ENCODE measurements at regions of chr17 and their contacts with region 1.

Region 1: GRCh38 chr17:48047741-48048383 is at the start of gene NFE2L1:
- DNase-seq: peak; percentile 100
- H3K4me3 Mint-ChIP-seq: peak within 1 kb of the TSS; percentile 97
- H3K27ac Mint-ChIP-seq: peak within 1 kb of the TSS; percentile 97
- H3K4me1 Mint-ChIP-seq: peaks cover 50% of the 10 kb centered on the region
- H3K27me3 Mint-ChIP-seq: no peaks in the 10 kb centered on the region
- total RNA-seq, gene NFE2L1: 82.4 to 84.1 TPM

Region 2: DNA sequence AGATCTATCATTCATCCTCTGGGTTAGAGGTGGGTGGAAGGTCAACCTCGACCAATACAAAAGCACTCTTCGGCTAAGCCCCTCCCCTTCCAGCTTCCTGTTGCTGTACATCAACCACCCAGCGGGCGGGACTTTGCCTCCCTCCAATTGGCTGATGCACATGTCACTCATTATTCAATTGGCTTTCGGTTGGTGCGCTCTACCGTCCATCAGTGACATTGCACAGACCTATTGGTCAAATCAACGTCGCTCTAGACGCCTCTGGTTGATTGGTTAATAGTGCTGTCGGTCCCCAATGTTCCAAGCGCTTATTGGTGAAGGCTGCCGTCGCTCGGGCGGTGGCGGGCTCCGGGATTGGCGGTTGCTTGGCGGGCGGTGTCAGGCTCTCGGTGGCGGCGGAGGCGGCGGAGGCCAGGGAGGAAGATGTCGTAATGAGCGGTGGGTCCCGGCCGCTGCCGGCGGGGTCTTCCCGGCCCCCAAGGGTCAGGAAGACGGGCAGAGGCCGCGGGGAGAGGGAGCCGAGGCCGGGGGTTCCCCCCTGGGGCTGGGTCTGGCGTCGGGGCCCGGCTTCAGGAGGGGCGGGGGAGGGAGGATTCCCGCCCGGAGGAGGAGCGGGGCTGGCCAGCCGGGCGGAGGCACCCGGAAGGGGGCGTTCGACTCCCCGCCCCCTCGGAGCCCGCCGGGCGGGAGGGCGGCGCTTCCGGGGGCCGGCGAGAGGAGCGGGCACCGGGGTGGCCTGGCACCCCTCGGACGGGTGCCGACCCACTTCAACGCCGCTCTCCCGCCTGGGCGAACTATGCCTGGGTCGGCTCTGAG is 151.8 kb before region 1 on chr17 and contains the start of gene SP2:
- CTCF ChIA-PET with region 1: no interaction called
- POLR2A ChIA-PET with region 1: no interaction called
- intact Hi-C with region 1: loop called (anchors 1 kb)
- DNase-seq: peak; percentile 100
- H3K4me3 Mint-ChIP-seq: peak within 1 kb of the TSS; percentile 95
- H3K27ac Mint-ChIP-seq: peak within 1 kb of the TSS; percentile 87
- H3K4me1 Mint-ChIP-seq: peaks cover 34% of the 10 kb centered on the region
- H3K27me3 Mint-ChIP-seq: no peaks in the 10 kb centered on the region
- total RNA-seq, gene SP2: 15.1 to 17.2 TPM

Region 3: GRCh38 chr17:48004983-48005382 is 42.9 kb before region 1 on chr17:
- CTCF ChIA-PET with region 1: no interaction called
- POLR2A ChIA-PET with region 1: no interaction called
- intact Hi-C with region 1: no loop called
- DNase-seq: no peak
- H3K4me3 Mint-ChIP-seq: no peak overlapping the region
- H3K27ac Mint-ChIP-seq: no peak overlapping the region
- H3K4me1 Mint-ChIP-seq: peaks cover 4% of the 10 kb centered on the region
- H3K27me3 Mint-ChIP-seq: peaks cover 29% of the 10 kb centered on the region

Region 4: GRCh38 chr17:48037036-48037837 is 10.6 kb before region 1 on chr17 and contains the start of gene COPZ2:
- CTCF ChIA-PET with region 1: interaction called, 27 read pairs
- POLR2A ChIA-PET with region 1: interaction called, 15 read pairs
- intact Hi-C with region 1: loop called (anchors 1 kb)
- DNase-seq: peak; percentile 76
- H3K4me3 Mint-ChIP-seq: peak within 1 kb of the TSS; percentile 78
- H3K27ac Mint-ChIP-seq: no peak within 1 kb of the TSS
- H3K4me1 Mint-ChIP-seq: peaks cover 7% of the 10 kb centered on the region
- H3K27me3 Mint-ChIP-seq: peaks cover 36% of the 10 kb centered on the region
- total RNA-seq, gene COPZ2: 4.9 to 6.2 TPM

Region 5: DNA sequence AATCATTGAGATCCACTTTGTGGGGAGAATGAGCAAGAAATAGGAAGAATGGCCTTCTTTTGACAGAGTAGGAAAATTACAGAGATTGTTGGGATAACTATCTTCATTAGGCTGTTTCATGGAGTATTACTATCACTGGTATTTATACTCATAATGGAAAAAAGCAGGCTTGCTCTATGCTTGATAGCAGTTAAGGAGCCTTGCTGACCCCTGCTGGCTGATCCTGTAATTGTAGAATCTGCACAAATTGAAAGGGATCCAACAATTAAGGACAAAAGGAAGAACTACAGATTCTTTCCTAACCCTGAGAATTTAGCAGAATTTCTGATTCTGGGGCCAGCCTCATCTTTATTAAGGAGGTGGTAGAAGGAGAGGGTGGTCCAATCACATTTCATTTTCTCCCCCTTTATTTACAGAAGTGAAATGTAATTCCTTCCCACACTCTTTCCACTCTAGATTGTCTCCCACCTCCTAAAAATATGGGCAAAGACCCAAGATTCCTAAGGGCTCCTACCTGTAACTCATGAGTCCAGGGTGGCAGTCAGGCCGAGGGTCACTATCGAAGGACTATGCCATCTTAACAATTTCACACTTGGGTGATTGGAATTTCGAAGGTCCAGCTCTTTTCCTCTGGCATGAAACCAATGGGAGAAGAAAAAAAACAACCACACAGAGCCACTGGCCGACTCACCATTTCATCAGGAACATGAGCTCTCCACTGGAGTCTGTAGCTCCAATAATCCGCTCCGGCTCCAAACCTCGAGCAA is 26.6 kb after region 1 on chr17:
- CTCF ChIA-PET with region 1: interaction called, 12 read pairs
- POLR2A ChIA-PET with region 1: no interaction called
- intact Hi-C with region 1: no loop called
- DNase-seq: peak; percentile 78
- H3K4me3 Mint-ChIP-seq: no peak overlapping the region
- H3K27ac Mint-ChIP-seq: no peak overlapping the region
- H3K4me1 Mint-ChIP-seq: no peaks in the 10 kb centered on the region
- H3K27me3 Mint-ChIP-seq: no peaks in the 10 kb centered on the region

Region 6: DNA sequence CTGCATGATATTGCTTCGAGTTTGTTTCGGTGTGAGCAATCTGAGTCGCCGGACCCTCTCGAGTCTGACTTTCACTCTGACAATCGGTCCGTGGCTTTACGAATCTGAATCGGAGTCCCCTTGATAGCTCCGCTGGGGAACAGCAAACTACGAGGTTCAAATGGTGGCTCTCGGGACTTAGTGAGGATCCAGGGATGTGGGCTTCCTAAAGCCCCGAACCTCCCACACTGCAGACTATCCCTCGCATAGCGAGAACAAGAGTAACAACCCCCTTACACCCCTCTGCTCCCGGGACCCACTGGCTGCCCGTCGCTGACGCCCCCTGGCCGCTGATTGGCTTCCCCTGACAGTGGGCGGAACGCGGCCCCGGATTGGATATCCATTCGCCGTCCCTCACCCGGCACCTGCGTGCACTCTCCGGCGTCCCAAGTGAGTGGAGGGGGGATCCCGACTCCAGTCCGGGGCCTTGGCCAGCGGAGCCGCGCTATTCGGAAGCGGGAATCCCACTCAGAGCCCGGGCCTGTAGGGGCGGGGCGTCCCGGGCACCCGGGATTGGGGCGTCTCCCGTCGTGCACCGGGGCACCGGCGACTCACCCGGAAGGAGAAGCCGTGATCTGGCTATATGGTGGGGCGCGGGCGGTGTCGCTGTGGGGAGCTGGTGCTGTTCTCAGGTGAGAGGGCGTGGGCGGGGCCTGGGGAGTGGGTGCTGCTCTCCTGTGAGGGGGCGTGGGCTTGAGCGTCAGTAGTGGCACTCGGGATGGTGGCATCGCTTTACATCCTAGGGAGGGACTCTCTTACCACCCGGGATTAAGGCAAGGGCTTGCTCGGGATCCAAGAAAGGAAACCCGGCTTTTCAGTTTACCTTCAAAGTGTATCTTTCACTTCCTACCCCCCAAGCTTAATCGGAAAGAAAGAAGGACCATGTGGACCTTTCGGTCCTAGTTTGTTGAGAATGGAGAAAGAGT is 59.6 kb after region 1 on chr17 and contains the start of gene SNX11:
- CTCF ChIA-PET with region 1: interaction called, 3 read pairs
- POLR2A ChIA-PET with region 1: interaction called, 17 read pairs
- intact Hi-C with region 1: loop called (anchors 1 kb)
- DNase-seq: peak; percentile 95
- H3K4me3 Mint-ChIP-seq: peak within 1 kb of the TSS; percentile 100
- H3K27ac Mint-ChIP-seq: peak within 1 kb of the TSS; percentile 97
- H3K4me1 Mint-ChIP-seq: peaks cover 59% of the 10 kb centered on the region
- H3K27me3 Mint-ChIP-seq: no peaks in the 10 kb centered on the region
- total RNA-seq, gene SNX11: 19.7 to 21.7 TPM

Region 7: DNA sequence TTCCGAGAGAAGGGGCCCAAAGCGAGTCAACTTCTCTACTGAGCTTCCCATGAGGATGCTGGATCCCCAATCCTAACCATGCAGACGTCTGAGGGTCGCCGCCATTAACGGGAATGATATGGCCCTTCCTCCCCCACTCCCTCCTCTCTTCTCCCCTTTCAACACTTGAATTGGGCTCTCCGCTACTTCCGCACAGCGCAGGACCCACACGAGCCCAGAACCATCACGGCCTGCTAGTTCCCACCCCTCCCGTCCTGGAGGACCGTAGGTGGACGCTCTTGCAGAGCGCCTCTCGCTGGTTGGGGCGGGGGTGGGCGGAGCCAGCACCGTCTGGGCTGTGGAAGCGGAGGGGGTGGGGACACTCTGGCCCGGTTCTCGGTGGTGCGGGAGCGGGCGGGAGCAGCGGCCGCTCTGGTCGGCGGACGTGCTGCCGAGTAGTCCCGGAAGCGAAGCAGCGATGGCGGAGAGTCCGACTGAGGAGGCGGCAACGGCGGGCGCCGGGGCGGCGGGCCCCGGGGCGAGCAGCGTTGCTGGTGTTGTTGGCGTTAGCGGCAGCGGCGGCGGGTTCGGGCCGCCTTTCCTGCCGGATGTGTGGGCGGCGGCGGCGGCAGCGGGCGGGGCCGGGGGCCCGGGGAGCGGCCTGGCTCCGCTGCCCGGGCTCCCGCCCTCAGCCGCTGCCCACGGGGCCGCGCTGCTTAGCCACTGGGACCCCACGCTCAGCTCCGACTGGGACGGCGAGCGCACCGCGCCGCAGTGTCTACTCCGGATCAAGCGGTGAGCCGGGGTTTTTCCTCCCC is 860.4 kb after region 1 on chr17 and contains the start of gene UBE2Z:
- CTCF ChIA-PET with region 1: no interaction called
- POLR2A ChIA-PET with region 1: no interaction called
- intact Hi-C with region 1: loop called (anchors 5 kb)
- DNase-seq: peak; percentile 93
- H3K4me3 Mint-ChIP-seq: peak within 1 kb of the TSS; percentile 87
- H3K27ac Mint-ChIP-seq: peak within 1 kb of the TSS; percentile 97
- H3K4me1 Mint-ChIP-seq: peaks cover 43% of the 10 kb centered on the region
- H3K27me3 Mint-ChIP-seq: no peaks in the 10 kb centered on the region
- total RNA-seq, gene UBE2Z: 102 to 109 TPM

Measured in activated CD4-positive, alpha-beta memory T cell treated with anti-CD3 and anti-CD28 coated beads for 36 hours (primary cell).